Aorta (tissue), 5 donors: ENCODE measurements at regions of chr14 and their contacts with region 1.

Region 1: DNA sequence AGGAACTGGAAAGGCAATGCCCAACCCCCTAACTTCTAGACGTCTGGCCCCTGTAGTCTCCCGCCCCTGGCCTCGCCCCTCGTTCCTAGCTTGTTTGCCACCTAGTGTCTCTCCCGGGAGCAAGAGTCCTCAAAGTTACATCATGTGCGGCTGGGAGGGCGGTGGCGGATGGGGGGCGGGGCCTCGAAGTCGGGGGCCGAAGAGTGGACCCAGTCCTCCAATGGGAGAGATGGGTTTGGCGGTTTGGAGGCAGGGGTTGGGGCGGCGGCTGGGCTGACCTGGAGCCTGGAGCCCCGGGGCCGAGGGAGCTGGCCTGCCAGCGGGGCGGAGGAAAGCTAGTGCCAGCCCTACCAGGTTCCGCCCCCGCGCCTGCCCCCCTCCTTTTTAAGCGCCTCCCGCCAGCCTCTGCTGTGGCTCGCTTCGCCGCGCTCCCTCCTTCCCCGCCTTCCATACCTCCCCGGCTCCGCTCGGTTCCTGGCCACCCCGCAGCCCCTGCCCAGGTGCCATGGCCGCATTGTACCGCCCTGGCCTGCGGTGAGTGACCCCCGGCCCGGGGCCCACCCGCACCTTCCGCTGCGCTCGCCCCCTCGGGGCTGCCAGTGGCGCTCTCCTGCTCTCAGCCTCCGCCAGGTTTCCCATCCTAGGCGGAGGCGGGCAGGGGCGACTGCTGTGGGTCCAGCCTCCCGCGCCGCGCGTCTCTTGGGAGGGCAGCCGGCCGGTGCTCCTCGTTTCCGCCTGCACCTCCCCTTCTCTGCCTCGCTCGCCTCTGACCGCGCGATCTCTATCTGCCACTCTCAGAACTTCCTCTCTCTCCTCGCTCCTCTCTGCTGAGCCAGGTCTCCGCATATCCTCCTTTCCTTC is at the start of gene PCK2:
- DNase-seq: peak; percentile 97
- ATAC-seq: peak; percentile 95
- H3K4me3 ChIP-seq: peak within 1 kb of the TSS; percentile 31 to 56
- H3K27ac ChIP-seq: peak within 1 kb of the TSS in 1 of 2 donors; percentile 46
- H3K4me1 ChIP-seq: no peaks in the 10 kb centered on the region
- H3K27me3 ChIP-seq: no peaks in the 10 kb centered on the region
- total RNA-seq, gene PCK2: 19.6 to 22.5 TPM

Region 2: DNA sequence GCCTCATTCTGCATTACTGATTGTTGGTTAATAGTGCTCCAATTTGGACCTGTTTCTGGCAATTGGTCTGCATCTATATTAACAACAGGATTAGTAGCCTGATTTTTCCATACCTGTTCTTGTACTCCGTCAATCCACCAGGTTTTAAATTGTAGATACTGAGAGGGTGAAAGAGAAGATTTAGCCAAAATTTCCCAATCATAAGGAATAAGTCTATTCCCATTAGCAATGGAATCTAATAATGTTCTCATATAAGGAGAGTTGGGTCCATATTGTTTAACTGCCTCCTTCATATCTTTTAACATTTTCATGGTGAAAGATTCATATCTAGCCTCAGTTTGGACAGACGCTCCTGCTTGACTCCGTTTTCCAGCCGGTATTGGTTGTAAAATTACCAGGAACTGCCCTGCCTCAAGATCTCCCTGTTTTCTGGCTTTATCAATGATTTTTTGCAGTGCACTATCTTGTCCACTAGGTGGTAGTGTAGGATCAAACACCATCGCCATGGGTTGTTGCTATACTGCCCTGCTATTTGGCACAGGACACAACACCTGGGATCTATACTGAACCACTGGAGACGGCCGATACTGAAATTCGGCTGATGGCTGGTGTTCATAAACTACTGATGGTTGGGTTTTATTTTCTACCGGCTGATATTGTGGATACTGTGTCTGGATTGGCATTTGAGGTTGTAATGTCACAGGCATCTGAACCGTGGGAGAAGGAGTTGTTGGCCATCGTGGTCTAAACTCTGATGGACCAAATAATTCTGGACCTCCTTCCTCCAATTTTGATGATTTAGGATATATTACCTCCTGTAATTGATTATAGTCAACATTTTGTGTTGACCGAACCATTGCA is 80.2 kb before region 1 on chr14:
- intact Hi-C with region 1: loop called (anchors 5 kb)
- DNase-seq: no peak
- ATAC-seq: peak; percentile 86
- H3K4me3 ChIP-seq: no peak overlapping the region
- H3K27ac ChIP-seq: no peak overlapping the region
- H3K4me1 ChIP-seq: no peaks in the 10 kb centered on the region
- H3K27me3 ChIP-seq: no peaks in the 10 kb centered on the region

Region 3: DNA sequence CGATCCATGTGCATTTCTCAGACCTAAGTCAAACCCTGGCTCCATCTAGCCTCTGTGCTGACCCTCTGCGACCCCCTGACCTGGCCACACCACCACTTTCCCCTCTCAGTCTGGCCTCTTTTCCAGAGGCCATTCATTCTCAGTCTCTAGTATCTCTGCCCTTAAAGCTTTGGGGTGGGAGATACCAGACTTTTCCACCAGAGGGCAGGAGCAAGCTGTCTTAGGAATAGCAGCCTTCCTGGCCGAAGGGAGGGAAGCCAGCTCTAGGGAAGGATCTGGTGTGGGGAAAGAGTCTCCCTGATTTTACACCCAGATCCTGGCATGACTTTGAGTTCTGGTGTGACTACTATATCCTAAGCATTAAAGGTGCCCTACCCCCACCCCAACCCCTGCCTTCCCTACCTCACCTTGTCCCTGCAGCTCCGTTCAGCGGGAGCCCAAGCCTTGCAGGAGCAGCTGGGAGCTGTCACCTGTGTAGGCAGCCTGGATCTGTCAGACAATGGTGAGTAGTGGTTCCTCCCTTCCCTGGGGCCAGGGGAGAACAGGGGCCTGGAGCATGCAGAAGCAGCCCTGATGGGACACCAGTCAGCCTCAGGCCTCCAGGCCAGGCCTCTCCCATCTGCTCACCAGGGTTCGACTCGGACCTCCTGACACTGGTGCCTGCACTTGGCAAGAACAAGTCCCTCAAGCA is 35.7 kb before region 1 on chr14:
- intact Hi-C with region 1: loop called (anchors 1 to 2 kb)
- DNase-seq: peak; percentile 78 to 83
- ATAC-seq: peak; percentile 49
- H3K4me3 ChIP-seq: no peak overlapping the region
- H3K27ac ChIP-seq: no peak overlapping the region
- H3K4me1 ChIP-seq: no peaks in the 10 kb centered on the region
- H3K27me3 ChIP-seq: no peaks in the 10 kb centered on the region

Region 4: GRCh38 chr14:24108336-24108874 is 14.3 kb after region 1 on chr14:
- intact Hi-C with region 1: loop called in 1 of 2 experiments (anchors 1 kb)
- DNase-seq: no peak
- ATAC-seq: no peak
- H3K4me3 ChIP-seq: no peak overlapping the region
- H3K27ac ChIP-seq: no peak overlapping the region
- H3K4me1 ChIP-seq: no peaks in the 10 kb centered on the region
- H3K27me3 ChIP-seq: no peaks in the 10 kb centered on the region

Region 5: GRCh38 chr14:24296341-24297157 is 202.4 kb after region 1 on chr14:
- intact Hi-C with region 1: no loop called
- DNase-seq: peak in 1 of 2 donors; percentile 71
- ATAC-seq: peak; percentile 74
- H3K4me3 ChIP-seq: no peak overlapping the region
- H3K27ac ChIP-seq: no peak overlapping the region
- H3K4me1 ChIP-seq: no peaks in the 10 kb centered on the region
- H3K27me3 ChIP-seq: no peaks in the 10 kb centered on the region

Region 6: GRCh38 chr14:24710403-24711112 is 616.4 kb after region 1 on chr14:
- intact Hi-C with region 1: no loop called
- DNase-seq: peak in 1 of 2 donors; percentile 55
- ATAC-seq: peak; percentile 76
- H3K4me3 ChIP-seq: no peak overlapping the region
- H3K27ac ChIP-seq: no peak overlapping the region
- H3K4me1 ChIP-seq: no peaks in the 10 kb centered on the region
- H3K27me3 ChIP-seq: no peaks in the 10 kb centered on the region